HepG2 (cell line): ENCODE measurements at regions of chr1 and their contacts with region 1.

Region 1: GRCh38 chr1:95226781-95227660 is 7.0 kb upstream of the RWDD3 start:
- DNase-seq: no peak
- ATAC-seq: peak; percentile 51
- H3K4me3 ChIP-seq: no peak overlapping the region
- H3K27ac ChIP-seq: peak overlapping the region; percentile 64
- H3K4me1 ChIP-seq: peaks cover 42% of the 10 kb centered on the region
- H3K27me3 ChIP-seq: no peaks in the 10 kb centered on the region
- CTCF ChIP-seq: no peak
- EP300 ChIP-seq: no peak
- POLR2A ChIP-seq: no peak
- RAD21 ChIP-seq: no peak

Region 2: GRCh38 chr1:95067062-95067461 is 160.0 kb before region 1 on chr1:
- CTCF ChIA-PET with region 1: no interaction called
- POLR2A ChIA-PET with region 1: no interaction called
- in situ Hi-C with region 1: no loop called
- intact Hi-C with region 1: loop called (anchors 1 kb)
- DNase-seq: peak; percentile 71
- ATAC-seq: peak; percentile 57
- H3K4me3 ChIP-seq: peak overlapping the region in 1 of 3 experiments; percentile 13; a peak in 1 of 6 replicates
- H3K27ac ChIP-seq: peak overlapping the region; percentile 86
- H3K4me1 ChIP-seq: peaks cover 64% of the 10 kb centered on the region
- H3K27me3 ChIP-seq: no peaks in the 10 kb centered on the region
- CTCF ChIP-seq: no peak
- EP300 ChIP-seq: peak in 1 of 2 experiments; percentile 93; a peak in 2 of 4 replicates
- POLR2A ChIP-seq: no peak
- RAD21 ChIP-seq: no peak

Region 3: DNA sequence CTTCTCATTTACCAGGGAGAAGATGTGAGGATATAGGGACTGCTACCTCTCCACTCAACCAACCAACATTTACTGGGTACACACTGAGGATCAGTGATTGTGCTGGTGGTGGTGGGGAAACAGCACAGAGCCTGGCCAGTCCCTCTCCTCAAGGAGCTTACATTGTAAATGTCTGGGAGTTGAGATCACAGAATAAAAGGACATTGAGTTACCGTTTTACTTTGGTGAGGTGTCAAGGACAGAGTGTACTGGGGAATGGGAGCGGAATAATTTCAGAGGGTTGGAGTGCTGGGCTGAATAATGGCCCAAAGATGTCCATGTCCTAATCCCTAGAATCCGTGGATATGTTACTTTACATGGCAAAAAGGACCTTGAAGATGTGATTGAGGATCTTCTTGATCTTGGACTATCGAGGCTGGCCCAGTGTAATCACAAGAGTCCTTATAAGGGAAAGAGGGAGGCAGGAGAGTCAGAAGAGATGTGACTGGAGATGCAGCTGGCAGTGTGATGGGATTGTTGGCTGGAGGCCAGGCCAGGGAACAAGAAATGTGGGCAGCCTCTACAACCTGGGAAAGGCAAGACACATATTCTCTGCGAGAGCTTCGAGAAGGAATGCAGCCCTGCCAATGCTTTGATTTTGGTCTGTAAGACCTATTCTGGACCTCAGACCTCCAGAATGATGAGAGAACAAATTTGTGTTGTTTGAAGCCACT is 19.6 kb before region 1 on chr1:
- CTCF ChIA-PET with region 1: no interaction called
- POLR2A ChIA-PET with region 1: no interaction called
- in situ Hi-C with region 1: no loop called
- intact Hi-C with region 1: no loop called
- DNase-seq: no peak
- ATAC-seq: no peak
- H3K4me3 ChIP-seq: no peak overlapping the region
- H3K27ac ChIP-seq: no peak overlapping the region
- H3K4me1 ChIP-seq: no peaks in the 10 kb centered on the region
- H3K27me3 ChIP-seq: no peaks in the 10 kb centered on the region
- CTCF ChIP-seq: no peak
- EP300 ChIP-seq: no peak
- POLR2A ChIP-seq: no peak
- RAD21 ChIP-seq: no peak

Region 4: DNA sequence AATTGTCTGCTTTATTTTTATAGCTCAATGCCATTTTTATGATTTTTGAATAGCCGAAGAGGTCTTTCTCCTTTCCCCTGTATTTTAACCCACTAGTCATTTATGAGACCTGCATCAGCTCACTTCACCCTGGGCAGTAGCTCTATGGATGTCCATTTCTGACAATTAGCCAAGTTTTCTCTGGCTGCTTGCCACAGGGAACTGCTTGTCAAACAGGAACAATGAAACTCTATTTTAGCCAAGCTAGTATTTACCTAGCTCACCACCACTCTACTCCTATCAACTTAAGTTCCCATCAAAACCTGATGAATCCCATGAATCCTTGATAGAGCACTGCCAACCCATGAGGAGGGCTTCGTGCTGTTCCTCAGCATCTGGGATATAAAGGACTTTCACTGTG is 413.7 kb after region 1 on chr1:
- CTCF ChIA-PET with region 1: no interaction called
- POLR2A ChIA-PET with region 1: no interaction called
- in situ Hi-C with region 1: no loop called
- intact Hi-C with region 1: no loop called
- DNase-seq: peak; percentile 44
- ATAC-seq: peak; percentile 61
- H3K4me3 ChIP-seq: no peak overlapping the region
- H3K27ac ChIP-seq: no peak overlapping the region
- H3K4me1 ChIP-seq: peaks cover 15% of the 10 kb centered on the region
- H3K27me3 ChIP-seq: no peaks in the 10 kb centered on the region
- CTCF ChIP-seq: no peak
- EP300 ChIP-seq: no peak
- POLR2A ChIP-seq: no peak
- RAD21 ChIP-seq: no peak